Transverse colon (tissue), 4 donors: ENCODE measurements at regions of chrX and their contacts with region 1.

Region 1: DNA sequence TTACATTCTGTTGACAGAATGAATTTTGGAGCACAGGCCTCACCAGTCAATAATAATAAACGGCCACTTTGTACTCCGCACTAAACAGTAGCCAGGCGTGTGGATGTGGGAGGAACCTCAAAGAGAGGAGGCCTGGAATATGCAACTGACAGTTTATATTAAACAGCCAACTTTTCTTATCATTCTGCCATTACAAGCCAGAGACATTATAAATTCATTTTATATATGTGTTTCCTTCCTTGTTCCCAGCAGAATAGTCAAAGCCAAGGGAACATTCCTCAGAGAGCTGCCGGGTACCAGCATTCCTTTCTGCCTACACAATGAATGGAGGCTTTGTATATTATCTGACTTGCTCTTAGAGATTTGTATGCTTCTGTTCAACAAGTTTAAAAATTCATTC is 436.5 kb upstream of the FTHL17 start:
- DNase-seq: peak; percentile 8
- H3K4me3 ChIP-seq: no peak overlapping the region
- H3K27ac ChIP-seq: peak overlapping the region in 3 of 4 donors; percentile 14 to 51 (median 42)
- H3K4me1 ChIP-seq: no peaks in the 10 kb centered on the region
- H3K27me3 ChIP-seq: no peaks in the 10 kb centered on the region
- CTCF ChIP-seq: no peak
- EP300 ChIP-seq: peak; percentile 5
- POLR2A ChIP-seq: no peak

Region 2: DNA sequence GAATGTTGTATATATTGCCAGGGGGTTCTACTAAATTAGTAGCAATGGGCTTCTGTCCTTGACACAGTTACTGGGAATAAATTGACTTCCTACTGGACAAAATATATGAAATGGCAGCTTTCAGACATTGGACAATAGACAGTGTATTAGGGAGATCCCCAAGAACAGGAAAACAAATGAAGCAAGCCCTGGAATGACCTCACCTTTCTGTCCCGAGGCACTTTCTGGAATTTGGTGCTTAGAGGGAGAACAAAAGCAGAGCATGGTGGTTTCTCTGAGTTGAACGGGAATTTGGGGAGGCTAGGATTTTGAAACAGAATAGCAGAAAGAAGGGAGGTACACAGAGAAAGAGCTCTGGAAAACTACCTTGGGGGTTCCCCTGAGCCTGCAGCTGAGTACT is 1480.7 kb before region 1 on chrX:
- in situ Hi-C with region 1: no loop called
- intact Hi-C with region 1: no loop called
- DNase-seq: no peak
- H3K4me3 ChIP-seq: no peak overlapping the region
- H3K27ac ChIP-seq: no peak overlapping the region
- H3K4me1 ChIP-seq: no peaks in the 10 kb centered on the region
- H3K27me3 ChIP-seq: no peaks in the 10 kb centered on the region
- CTCF ChIP-seq: no peak
- EP300 ChIP-seq: no peak
- POLR2A ChIP-seq: no peak

Region 3: GRCh38 chrX:31423609-31424189 is 84.6 kb before region 1 on chrX:
- in situ Hi-C with region 1: loop called in 1 of 4 experiments (anchors 25 kb)
- intact Hi-C with region 1: no loop called
- DNase-seq: peak; percentile 19
- H3K4me3 ChIP-seq: no peak overlapping the region
- H3K27ac ChIP-seq: no peak overlapping the region
- H3K4me1 ChIP-seq: no peaks in the 10 kb centered on the region
- H3K27me3 ChIP-seq: no peaks in the 10 kb centered on the region
- CTCF ChIP-seq: peak in 1 of 5 experiments; percentile 12
- EP300 ChIP-seq: no peak
- POLR2A ChIP-seq: no peak

Region 4: GRCh38 chrX:31546130-31546529 is 37.8 kb after region 1 on chrX:
- in situ Hi-C with region 1: no loop called
- intact Hi-C with region 1: no loop called
- DNase-seq: no peak
- H3K4me3 ChIP-seq: no peak overlapping the region
- H3K27ac ChIP-seq: no peak overlapping the region
- H3K4me1 ChIP-seq: no peaks in the 10 kb centered on the region
- H3K27me3 ChIP-seq: no peaks in the 10 kb centered on the region
- CTCF ChIP-seq: no peak
- EP300 ChIP-seq: no peak
- POLR2A ChIP-seq: no peak

Region 5: GRCh38 chrX:31604629-31605221 is 96.4 kb after region 1 on chrX:
- in situ Hi-C with region 1: no loop called
- intact Hi-C with region 1: no loop called
- DNase-seq: no peak
- H3K4me3 ChIP-seq: no peak overlapping the region
- H3K27ac ChIP-seq: no peak overlapping the region
- H3K4me1 ChIP-seq: no peaks in the 10 kb centered on the region
- H3K27me3 ChIP-seq: no peaks in the 10 kb centered on the region
- CTCF ChIP-seq: no peak
- EP300 ChIP-seq: no peak
- POLR2A ChIP-seq: no peak

Region 6: GRCh38 chrX:31619653-31620052 is 111.3 kb after region 1 on chrX:
- in situ Hi-C with region 1: no loop called
- intact Hi-C with region 1: no loop called
- DNase-seq: no peak
- H3K4me3 ChIP-seq: no peak overlapping the region
- H3K27ac ChIP-seq: no peak overlapping the region
- H3K4me1 ChIP-seq: no peaks in the 10 kb centered on the region
- H3K27me3 ChIP-seq: no peaks in the 10 kb centered on the region
- CTCF ChIP-seq: no peak
- EP300 ChIP-seq: no peak
- POLR2A ChIP-seq: no peak